CD4-positive, alpha-beta memory T cell (primary cell): ENCODE measurements at regions of chr16 and their contacts with region 1.

Region 1: GRCh38 chr16:25111403-25112166 is at the start of gene LCMT1:
- DNase-seq: peak; percentile 92 to 97 (median 94)
- H3K4me3 ChIP-seq: peak within 1 kb of the TSS; percentile 71 to 79
- H3K4me3 Mint-ChIP-seq: peak within 1 kb of the TSS; percentile 94 to 99 (median 96)
- H3K27ac ChIP-seq: peak within 1 kb of the TSS; percentile 64
- H3K27ac Mint-ChIP-seq: peak within 1 kb of the TSS; percentile 65 to 97 (median 96)
- H3K4me1 ChIP-seq: peaks cover 50% of the 10 kb centered on the region
- H3K4me1 Mint-ChIP-seq: peaks cover 43 to 66% (median 53%) of the 10 kb centered on the region in 4 donors
- H3K27me3 ChIP-seq: no peaks in the 10 kb centered on the region
- H3K27me3 Mint-ChIP-seq: no peaks in the 10 kb centered on the region
- total RNA-seq, gene LCMT1: 37.0 to 37.9 TPM

Region 2: GRCh38 chr16:25014500-25015147 is 97.0 kb before region 1 on chr16:
- CTCF ChIA-PET with region 1: interaction called, 5 read pairs
- POLR2A ChIA-PET with region 1: interaction called, 16 read pairs
- intact Hi-C with region 1: loop called (anchors 5 kb)
- DNase-seq: peak in 4 of 5 donors; percentile 15 to 48 (median 26)
- H3K4me3 ChIP-seq: peak overlapping the region; percentile 57 to 71
- H3K4me3 Mint-ChIP-seq: peak overlapping the region; percentile 88 to 99 (median 97)
- H3K27ac ChIP-seq: peak overlapping the region; percentile 89
- H3K27ac Mint-ChIP-seq: peak overlapping the region; percentile 92 to 99 (median 97)
- H3K4me1 ChIP-seq: peaks cover 72% of the 10 kb centered on the region
- H3K4me1 Mint-ChIP-seq: peaks cover 58 to 85% (median 73%) of the 10 kb centered on the region in 4 donors
- H3K27me3 ChIP-seq: no peaks in the 10 kb centered on the region
- H3K27me3 Mint-ChIP-seq: no peaks in the 10 kb centered on the region

Region 3: DNA sequence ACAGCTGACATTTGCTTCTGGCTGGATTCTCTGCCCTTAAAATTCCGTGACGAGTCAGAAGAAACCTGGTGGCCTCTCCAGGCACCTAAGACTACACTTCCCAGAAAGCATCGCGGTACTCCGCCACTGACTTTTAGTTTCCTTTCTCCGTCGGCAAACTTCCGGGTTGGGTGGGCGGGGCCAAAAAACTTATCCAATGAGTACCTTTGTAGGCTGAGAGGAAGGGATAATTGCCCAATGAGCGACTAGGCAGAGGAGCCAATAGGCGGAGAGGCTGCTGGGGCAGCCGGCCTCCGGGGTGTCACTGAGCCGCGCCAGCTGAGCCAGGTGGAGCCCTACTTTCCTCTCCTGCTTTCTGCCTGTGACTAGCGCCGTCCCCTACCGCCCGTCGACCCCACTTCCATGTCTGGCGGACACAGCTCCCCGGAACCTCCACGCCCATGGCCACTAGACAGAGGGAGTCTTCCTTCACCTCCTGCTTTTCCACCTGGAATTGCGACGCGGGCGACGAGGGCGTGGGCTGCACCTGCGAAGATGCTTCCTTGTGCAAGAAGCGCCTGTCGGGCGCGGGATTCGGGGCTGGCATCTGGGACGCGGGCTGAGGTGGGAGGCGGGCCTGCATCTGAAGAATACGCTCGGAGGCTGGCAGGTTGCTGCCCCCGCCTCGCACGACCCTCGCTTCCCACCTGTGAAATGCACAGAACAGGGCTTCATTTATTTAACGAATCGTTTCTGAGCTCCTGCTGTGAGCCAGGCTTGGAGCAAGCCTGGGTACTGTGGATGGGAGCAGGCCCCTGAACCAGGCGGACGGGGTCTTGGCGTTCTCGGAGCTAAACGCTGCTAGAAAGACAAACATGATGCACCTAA is 79.9 kb before region 1 on chr16:
- CTCF ChIA-PET with region 1: interaction called, 6 read pairs
- POLR2A ChIA-PET with region 1: interaction called, 20 read pairs
- intact Hi-C with region 1: loop called (anchors 1 kb)
- DNase-seq: peak; percentile 90 to 96 (median 94)
- H3K4me3 ChIP-seq: peak overlapping the region; percentile 26 to 75
- H3K4me3 Mint-ChIP-seq: peak overlapping the region; percentile 91 to 98 (median 96)
- H3K27ac ChIP-seq: peak overlapping the region; percentile 70
- H3K27ac Mint-ChIP-seq: peak overlapping the region; percentile 85 to 97 (median 96)
- H3K4me1 ChIP-seq: peaks cover 17% of the 10 kb centered on the region
- H3K4me1 Mint-ChIP-seq: peaks cover 23 to 43% (median 34%) of the 10 kb centered on the region in 4 donors
- H3K27me3 ChIP-seq: no peaks in the 10 kb centered on the region
- H3K27me3 Mint-ChIP-seq: no peaks in the 10 kb centered on the region

Region 4: DNA sequence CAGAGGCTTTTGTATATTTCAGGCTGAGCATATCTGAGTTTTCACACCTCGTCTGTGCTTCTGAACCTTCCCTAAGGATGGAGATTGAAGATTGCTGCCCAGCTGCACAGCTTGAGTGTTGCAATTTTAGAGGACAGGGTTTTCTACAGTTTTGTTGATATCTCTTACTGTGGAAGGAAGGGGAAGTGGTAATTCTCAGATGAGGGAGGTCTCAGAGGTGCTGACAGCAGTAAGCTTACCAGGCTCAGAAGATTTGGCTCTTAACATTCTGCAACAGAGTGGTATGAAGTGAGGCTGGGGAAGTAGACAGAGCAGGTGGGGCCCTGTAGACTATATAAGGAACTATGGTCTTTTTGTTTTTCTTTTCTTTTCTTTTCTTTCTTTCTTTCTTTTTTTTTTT is 50.7 kb before region 1 on chr16:
- CTCF ChIA-PET with region 1: interaction called, 127 read pairs
- POLR2A ChIA-PET with region 1: interaction called, 69 read pairs
- intact Hi-C with region 1: loop called (anchors 1 kb)
- DNase-seq: peak in 4 of 5 donors; percentile 53 to 69 (median 60)
- H3K4me3 ChIP-seq: no peak overlapping the region
- H3K4me3 Mint-ChIP-seq: peak overlapping the region; percentile 60 to 88 (median 77)
- H3K27ac ChIP-seq: peak overlapping the region; percentile 51
- H3K27ac Mint-ChIP-seq: peak overlapping the region; percentile 87 to 97 (median 91)
- H3K4me1 ChIP-seq: peaks cover 45% of the 10 kb centered on the region
- H3K4me1 Mint-ChIP-seq: peaks cover 34 to 56% (median 41%) of the 10 kb centered on the region in 4 donors
- H3K27me3 ChIP-seq: no peaks in the 10 kb centered on the region
- H3K27me3 Mint-ChIP-seq: no peaks in the 10 kb centered on the region

Region 5: DNA sequence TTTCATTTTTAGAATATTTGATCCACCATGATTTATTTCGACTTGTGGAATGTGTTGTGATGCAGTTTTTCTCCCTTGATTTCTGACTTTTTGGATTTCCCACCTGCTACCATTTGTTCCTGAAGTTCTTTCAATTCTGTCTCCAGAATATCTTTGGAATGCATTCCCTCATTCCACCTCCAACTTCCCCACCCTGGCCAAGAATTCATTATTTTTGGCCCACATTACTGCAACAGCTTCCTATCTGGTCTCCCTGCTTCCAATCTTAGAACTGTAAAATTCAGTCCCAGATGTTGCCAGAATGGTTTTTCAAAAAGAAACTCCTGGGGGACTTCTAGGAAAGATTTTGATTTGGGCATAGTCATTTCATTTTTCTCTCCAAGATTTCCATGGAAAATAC is 397.9 kb after region 1 on chr16:
- CTCF ChIA-PET with region 1: no interaction called
- POLR2A ChIA-PET with region 1: no interaction called
- intact Hi-C with region 1: no loop called
- DNase-seq: no peak
- H3K4me3 ChIP-seq: no peak overlapping the region
- H3K4me3 Mint-ChIP-seq: no peak overlapping the region
- H3K27ac ChIP-seq: no peak overlapping the region
- H3K27ac Mint-ChIP-seq: no peak overlapping the region
- H3K4me1 ChIP-seq: no peaks in the 10 kb centered on the region
- H3K4me1 Mint-ChIP-seq: no peaks in the 10 kb centered on the region
- H3K27me3 ChIP-seq: no peaks in the 10 kb centered on the region
- H3K27me3 Mint-ChIP-seq: peaks cover 10 to 19% of the 10 kb centered on the region in 2 donors

Region 6: GRCh38 chr16:25593260-25593659 is 481.7 kb after region 1 on chr16:
- CTCF ChIA-PET with region 1: no interaction called
- POLR2A ChIA-PET with region 1: no interaction called
- intact Hi-C with region 1: no loop called
- DNase-seq: no peak
- H3K4me3 ChIP-seq: no peak overlapping the region
- H3K4me3 Mint-ChIP-seq: no peak overlapping the region
- H3K27ac ChIP-seq: no peak overlapping the region
- H3K27ac Mint-ChIP-seq: no peak overlapping the region
- H3K4me1 ChIP-seq: no peaks in the 10 kb centered on the region
- H3K4me1 Mint-ChIP-seq: peaks cover 0 to 3% (median 0%) of the 10 kb centered on the region in 4 donors
- H3K27me3 ChIP-seq: no peaks in the 10 kb centered on the region
- H3K27me3 Mint-ChIP-seq: peaks cover 3 to 8% of the 10 kb centered on the region in 2 donors